Caco-2 (cell line): ENCODE measurements at regions of chr1 and their contacts with region 1.

Region 1: GRCh38 chr1:28088168-28088961 is at the start of gene EYA3:
- DNase-seq: peak; percentile 95 to 97
- H3K4me3 ChIP-seq: peak within 1 kb of the TSS; percentile 65
- H3K4me3 Mint-ChIP-seq: peak within 1 kb of the TSS; percentile 100
- H3K27ac Mint-ChIP-seq: peak within 1 kb of the TSS; percentile 98
- H3K4me1 ChIP-seq: 0 out of 2 replicates have a peak, but pooled peaks cover 6% of the 10 kb centered on the region
- H3K4me1 Mint-ChIP-seq: peaks cover 14% of the 10 kb centered on the region
- H3K27me3 ChIP-seq: no peaks in the 10 kb centered on the region
- H3K27me3 Mint-ChIP-seq: no peaks in the 10 kb centered on the region
- CTCF ChIP-seq: no peak
- total RNA-seq, gene EYA3: 9.9 and 11.2 TPM in 2 replicates

Region 2: GRCh38 chr1:27816921-27817630 is 271.3 kb before region 1 on chr1:
- CTCF ChIA-PET with region 1: no interaction called
- POLR2A ChIA-PET with region 1: no interaction called
- intact Hi-C with region 1: no loop called
- DNase-seq: peak; percentile 80 to 87
- H3K4me3 ChIP-seq: no peak overlapping the region
- H3K4me3 Mint-ChIP-seq: peak overlapping the region; percentile 62
- H3K27ac Mint-ChIP-seq: peak overlapping the region; percentile 94
- H3K4me1 ChIP-seq: peaks cover 23% of the 10 kb centered on the region
- H3K4me1 Mint-ChIP-seq: peaks cover 22% of the 10 kb centered on the region
- H3K27me3 ChIP-seq: no peaks in the 10 kb centered on the region
- H3K27me3 Mint-ChIP-seq: no peaks in the 10 kb centered on the region
- CTCF ChIP-seq: no peak

Region 3: DNA sequence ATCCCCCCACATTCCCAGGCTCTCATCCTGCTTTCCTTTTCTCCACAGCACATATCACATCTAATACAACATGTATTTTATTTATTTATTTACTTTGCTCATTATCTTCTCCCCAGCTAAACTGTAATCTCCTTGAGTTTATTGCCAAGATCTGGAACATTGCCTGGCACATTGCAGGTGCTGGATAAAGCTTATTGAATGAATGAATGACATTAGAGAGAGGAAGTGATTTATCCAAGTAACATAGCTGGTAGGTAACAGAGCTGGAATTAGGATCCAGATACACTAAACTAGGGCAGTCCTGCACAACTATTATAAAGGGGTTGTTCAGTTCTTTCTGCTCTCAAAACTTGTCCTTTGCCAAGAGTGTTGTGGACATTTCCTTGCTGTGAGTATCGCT is 96.7 kb after region 1 on chr1:
- CTCF ChIA-PET with region 1: no interaction called
- POLR2A ChIA-PET with region 1: no interaction called
- intact Hi-C with region 1: loop called (anchors 5 kb)
- DNase-seq: no peak
- H3K4me3 ChIP-seq: no peak overlapping the region
- H3K4me3 Mint-ChIP-seq: no peak overlapping the region
- H3K27ac Mint-ChIP-seq: no peak overlapping the region
- H3K4me1 ChIP-seq: 0 out of 2 replicates have a peak, but pooled peaks cover under 1% of the 10 kb centered on the region
- H3K4me1 Mint-ChIP-seq: peaks cover 7% of the 10 kb centered on the region
- H3K27me3 ChIP-seq: no peaks in the 10 kb centered on the region
- H3K27me3 Mint-ChIP-seq: peaks cover 3% of the 10 kb centered on the region
- CTCF ChIP-seq: no peak

Region 4: DNA sequence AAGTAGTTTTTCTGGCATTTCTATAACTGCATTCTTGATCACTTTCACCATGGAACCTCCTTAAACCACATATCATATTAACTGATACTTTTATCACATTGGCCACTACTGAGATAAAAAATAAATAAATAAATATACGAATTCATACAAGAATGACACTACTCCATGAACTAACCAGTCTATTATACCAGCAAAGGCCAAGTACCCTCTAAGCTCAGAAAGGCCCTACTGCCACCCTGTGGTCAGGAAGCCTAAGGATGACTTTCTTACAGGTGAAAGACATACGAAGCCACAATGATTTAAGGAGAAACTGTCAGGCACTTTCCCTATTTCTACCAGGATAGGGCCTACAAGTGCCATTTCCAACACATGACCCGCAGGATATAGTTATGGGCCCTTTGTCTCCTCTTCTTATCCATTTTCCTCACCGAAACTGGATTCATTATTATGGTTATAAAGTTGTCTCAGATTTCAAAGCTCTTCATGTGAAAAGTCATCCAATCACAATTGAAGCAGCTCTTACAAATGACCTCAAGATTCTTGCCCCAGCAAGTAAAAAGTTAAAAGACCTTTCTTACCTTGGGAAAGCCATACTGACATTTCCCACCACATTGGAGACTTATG is 120.6 kb after region 1 on chr1:
- CTCF ChIA-PET with region 1: interaction called, 22 read pairs
- POLR2A ChIA-PET with region 1: no interaction called
- intact Hi-C with region 1: loop called (anchors 1 kb)
- DNase-seq: peak; percentile 40 to 49
- H3K4me3 ChIP-seq: no peak overlapping the region
- H3K4me3 Mint-ChIP-seq: no peak overlapping the region
- H3K27ac Mint-ChIP-seq: no peak overlapping the region
- H3K4me1 ChIP-seq: no peaks in the 10 kb centered on the region
- H3K4me1 Mint-ChIP-seq: no peaks in the 10 kb centered on the region
- H3K27me3 ChIP-seq: no peaks in the 10 kb centered on the region
- H3K27me3 Mint-ChIP-seq: no peaks in the 10 kb centered on the region
- CTCF ChIP-seq: peak; percentile 39 to 67

Region 5: DNA sequence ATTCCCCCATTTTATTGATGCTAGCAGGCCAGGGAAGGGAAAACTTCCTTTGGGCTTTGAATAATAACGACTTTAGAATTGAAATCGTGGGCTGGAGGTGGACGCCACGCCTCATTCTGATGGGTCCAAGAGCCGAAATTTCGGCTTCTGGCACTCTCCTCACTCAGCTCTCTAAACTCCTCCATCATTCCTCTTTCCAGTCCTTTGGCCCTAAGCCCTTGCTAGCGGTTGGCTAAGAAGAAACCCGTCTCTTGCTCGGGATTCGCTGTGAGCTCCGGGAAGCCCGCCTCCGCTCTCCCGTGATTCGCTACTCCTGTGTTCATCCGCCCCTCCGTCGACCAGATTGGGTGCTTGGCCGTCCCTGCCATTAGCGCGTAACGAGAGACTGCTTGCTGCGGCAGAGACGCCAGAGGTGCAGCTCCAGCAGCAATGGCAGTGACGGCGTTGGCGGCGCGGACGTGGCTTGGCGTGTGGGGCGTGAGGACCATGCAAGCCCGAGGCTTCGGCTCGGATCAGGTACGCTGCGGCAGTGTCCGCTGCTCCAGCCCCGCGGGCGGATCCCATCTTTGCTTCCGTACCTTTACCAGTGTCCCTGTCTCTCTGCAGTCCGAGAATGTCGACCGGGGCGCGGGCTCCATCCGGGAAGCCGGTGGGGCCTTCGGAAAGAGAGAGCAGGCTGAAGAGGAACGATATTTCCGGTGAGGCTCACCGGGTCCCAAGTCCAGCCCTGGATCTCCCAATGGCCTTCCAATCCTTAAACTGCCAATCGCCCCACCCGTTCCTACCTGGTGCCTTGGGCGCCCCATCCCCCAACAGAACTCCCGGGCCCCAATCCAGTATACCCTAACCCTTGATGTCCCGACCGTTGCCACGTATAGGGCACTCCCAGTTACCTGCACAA is 147.6 kb after region 1 on chr1 and contains the start of gene ATP5IF1:
- CTCF ChIA-PET with region 1: interaction called, 14 read pairs
- POLR2A ChIA-PET with region 1: interaction called, 9 read pairs
- intact Hi-C with region 1: no loop called
- DNase-seq: peak; percentile 90 to 94
- H3K4me3 ChIP-seq: peak within 1 kb of the TSS; percentile 95
- H3K4me3 Mint-ChIP-seq: no peak within 1 kb of the TSS
- H3K27ac Mint-ChIP-seq: no peak within 1 kb of the TSS
- H3K4me1 ChIP-seq: no peaks in the 10 kb centered on the region
- H3K4me1 Mint-ChIP-seq: no peaks in the 10 kb centered on the region
- H3K27me3 ChIP-seq: no peaks in the 10 kb centered on the region
- H3K27me3 Mint-ChIP-seq: no peaks in the 10 kb centered on the region
- CTCF ChIP-seq: no peak
- total RNA-seq, gene ATP5IF1: 126 and 130 TPM in 2 replicates